Caco-2 (cell line): ENCODE measurements at regions of chrX and their contacts with region 1.

Region 1: GRCh38 chrX:57453901-57454300 is 137.9 kb upstream of the ZXDB start:
- DNase-seq: peak in 1 of 2 experiments; percentile 5
- H3K4me3 ChIP-seq: no peak overlapping the region
- H3K4me3 Mint-ChIP-seq: no peak overlapping the region
- H3K27ac Mint-ChIP-seq: no peak overlapping the region
- H3K4me1 ChIP-seq: no peaks in the 10 kb centered on the region
- H3K4me1 Mint-ChIP-seq: no peaks in the 10 kb centered on the region
- H3K27me3 ChIP-seq: no peaks in the 10 kb centered on the region
- H3K27me3 Mint-ChIP-seq: no peaks in the 10 kb centered on the region
- CTCF ChIP-seq: peak in 1 of 2 experiments; percentile 18

Region 2: DNA sequence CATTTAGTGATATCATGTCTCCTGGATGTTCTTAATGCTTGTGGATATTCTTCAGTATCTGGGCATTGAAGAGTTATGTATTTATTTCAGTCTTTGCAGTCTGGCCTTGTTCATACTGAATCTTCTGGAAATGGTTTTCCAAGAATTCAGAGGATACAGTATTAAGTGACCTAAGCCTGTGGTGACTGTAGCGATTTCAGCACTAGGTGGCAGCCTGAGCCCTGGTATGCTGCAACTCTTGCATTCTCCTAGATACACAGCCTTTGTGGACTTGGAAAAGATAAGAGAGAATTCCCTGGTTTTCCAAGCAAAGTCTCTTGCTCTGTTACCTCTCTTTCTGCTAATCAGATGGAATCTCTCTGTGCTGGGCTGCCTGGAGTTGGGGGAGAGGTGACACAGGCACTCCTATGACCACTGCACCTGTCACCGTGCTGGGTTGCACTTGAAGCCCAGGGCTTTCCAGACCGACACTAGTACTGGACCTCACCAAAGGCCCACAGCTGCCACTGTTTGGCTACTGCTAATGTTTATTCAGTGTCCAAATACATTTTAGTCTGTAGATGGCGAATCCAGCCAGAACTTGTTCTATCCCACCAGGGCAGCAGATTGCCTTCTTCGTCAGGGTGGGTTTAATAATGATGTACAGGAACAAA is 297.4 kb before region 1 on chrX:
- CTCF ChIA-PET with region 1: no interaction called
- POLR2A ChIA-PET with region 1: no interaction called
- intact Hi-C with region 1: loop called (anchors 1 kb)
- DNase-seq: peak; percentile 46 to 54
- H3K4me3 ChIP-seq: no peak overlapping the region
- H3K4me3 Mint-ChIP-seq: no peak overlapping the region
- H3K27ac Mint-ChIP-seq: no peak overlapping the region
- H3K4me1 ChIP-seq: no peaks in the 10 kb centered on the region
- H3K4me1 Mint-ChIP-seq: peaks cover 11% of the 10 kb centered on the region
- H3K27me3 ChIP-seq: no peaks in the 10 kb centered on the region
- H3K27me3 Mint-ChIP-seq: no peaks in the 10 kb centered on the region
- CTCF ChIP-seq: peak; percentile 43 to 61

Region 3: GRCh38 chrX:57595381-57595811 is 141.5 kb after region 1 on chrX:
- CTCF ChIA-PET with region 1: no interaction called
- POLR2A ChIA-PET with region 1: no interaction called
- intact Hi-C with region 1: no loop called
- DNase-seq: no peak
- H3K4me3 ChIP-seq: no peak overlapping the region
- H3K4me3 Mint-ChIP-seq: peak overlapping the region; percentile 57
- H3K27ac Mint-ChIP-seq: no peak overlapping the region
- H3K4me1 ChIP-seq: no peaks in the 10 kb centered on the region
- H3K4me1 Mint-ChIP-seq: peaks cover 12% of the 10 kb centered on the region
- H3K27me3 ChIP-seq: no peaks in the 10 kb centered on the region
- H3K27me3 Mint-ChIP-seq: no peaks in the 10 kb centered on the region
- CTCF ChIP-seq: no peak